Common myeloid progenitor, CD34-positive (primary cell): ENCODE measurements at regions of chr16 and their contacts with region 1.

Region 1: GRCh38 chr16:57863434-57864160 is 61.3 kb upstream of the KIFC3 start:
- DNase-seq: peak; percentile 44 to 46 (median 46)
- H3K4me3 ChIP-seq: no peak overlapping the region
- H3K27ac ChIP-seq: no peak overlapping the region
- H3K4me1 ChIP-seq: peaks cover 0 to 2% (median under 1%) of the 10 kb centered on the region in 4 experiments
- H3K27me3 ChIP-seq: no peaks in the 10 kb centered on the region

Region 2: DNA sequence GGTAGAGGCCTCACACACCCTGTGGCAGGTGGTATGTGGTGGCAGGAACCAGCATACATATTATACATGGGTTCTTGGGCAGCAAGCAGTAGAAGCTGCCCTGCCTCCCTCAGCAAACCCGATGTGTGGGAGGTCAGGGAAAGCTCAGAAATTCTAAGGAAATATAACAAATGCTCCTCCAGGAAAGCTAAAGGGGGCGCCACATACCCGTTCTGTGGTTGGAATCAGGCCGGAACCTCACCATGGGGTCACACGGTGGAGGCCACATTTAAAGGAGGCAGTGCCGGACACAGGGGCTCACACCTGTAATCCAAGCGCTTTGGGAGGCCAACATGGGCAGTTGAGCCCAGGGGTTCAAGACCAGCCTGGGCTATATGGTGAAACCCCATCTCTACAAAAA is 140.4 kb before region 1 on chr16:
- CTCF ChIA-PET with region 1: no interaction called
- POLR2A ChIA-PET with region 1: no interaction called
- DNase-seq: no peak
- H3K4me3 ChIP-seq: no peak overlapping the region
- H3K27ac ChIP-seq: no peak overlapping the region
- H3K4me1 ChIP-seq: peaks cover 0 to 45% (median 10%) of the 10 kb centered on the region in 4 experiments
- H3K27me3 ChIP-seq: no peaks in the 10 kb centered on the region

Region 3: DNA sequence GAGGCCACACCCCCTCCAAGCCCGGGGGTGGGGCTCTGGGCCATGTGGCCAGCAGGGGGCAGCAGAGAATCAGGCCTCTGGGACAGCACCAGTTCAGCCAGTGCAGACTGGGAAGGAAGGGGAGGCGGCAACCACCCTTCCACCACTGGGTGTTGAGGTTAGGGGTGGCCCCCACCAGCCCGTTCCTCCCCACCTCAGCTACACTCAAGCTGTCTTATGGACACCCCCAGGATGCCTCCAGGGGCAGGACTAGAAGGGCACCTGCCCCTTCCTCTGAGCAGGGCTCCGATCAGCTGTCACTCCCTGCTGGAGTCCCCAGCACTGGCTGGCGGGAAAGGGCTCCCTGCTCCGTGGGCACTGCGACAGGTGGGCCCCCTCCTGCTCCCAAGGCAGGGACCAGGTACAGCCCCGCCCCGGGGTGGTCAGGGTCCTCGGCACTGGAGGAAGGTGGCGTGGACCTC is 106.2 kb before region 1 on chr16:
- CTCF ChIA-PET with region 1: interaction called, 22 read pairs
- POLR2A ChIA-PET with region 1: no interaction called
- DNase-seq: peak; percentile 58 to 71 (median 62)
- H3K4me3 ChIP-seq: no peak overlapping the region
- H3K27ac ChIP-seq: no peak overlapping the region
- H3K4me1 ChIP-seq: peaks cover 0 to 5% (median 0%) of the 10 kb centered on the region in 4 experiments
- H3K27me3 ChIP-seq: no peaks in the 10 kb centered on the region

Region 4: DNA sequence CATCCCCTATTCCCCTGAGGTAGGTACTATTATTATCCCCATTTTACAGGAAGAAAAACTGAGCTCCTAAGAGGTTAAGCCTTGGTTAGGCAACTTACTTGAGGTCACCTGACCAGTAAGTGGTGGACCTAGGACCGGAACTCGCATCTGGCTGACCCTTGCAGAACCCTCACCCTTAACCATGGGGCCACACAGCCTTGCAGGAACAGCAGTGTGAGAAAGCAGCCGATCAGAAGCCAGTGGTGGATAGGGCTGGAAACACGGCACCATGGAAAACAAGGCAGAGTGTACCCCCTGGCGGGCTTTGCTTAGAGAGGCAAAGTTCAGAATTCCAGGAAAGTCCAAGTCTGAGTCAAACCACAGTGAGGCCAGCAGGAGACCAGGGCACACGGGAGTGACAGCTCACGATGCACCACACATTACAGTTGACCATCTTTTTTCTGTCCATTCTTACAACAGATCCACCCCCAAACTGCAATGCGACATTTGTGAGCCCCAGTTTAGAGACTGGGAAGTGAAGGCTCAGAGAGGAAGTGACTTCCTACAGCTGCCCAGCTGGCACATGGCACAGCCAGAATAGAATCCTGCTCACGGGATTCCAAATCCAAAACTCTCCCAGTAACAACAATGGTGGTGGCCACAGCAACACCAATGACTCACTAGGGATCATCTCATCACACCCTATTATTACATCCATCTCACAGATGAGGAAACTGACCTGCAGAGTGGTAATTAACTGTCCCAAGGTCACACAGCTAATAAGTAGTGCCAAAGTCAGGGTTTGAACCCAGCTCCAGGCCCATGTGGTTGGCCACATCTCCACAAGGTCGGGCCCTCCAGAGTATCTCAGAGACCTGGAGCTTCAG is 81.6 kb before region 1 on chr16:
- CTCF ChIA-PET with region 1: no interaction called
- POLR2A ChIA-PET with region 1: no interaction called
- DNase-seq: no peak
- H3K4me3 ChIP-seq: no peak overlapping the region
- H3K27ac ChIP-seq: no peak overlapping the region
- H3K4me1 ChIP-seq: no peaks in the 10 kb centered on the region
- H3K27me3 ChIP-seq: no peaks in the 10 kb centered on the region

Region 5: DNA sequence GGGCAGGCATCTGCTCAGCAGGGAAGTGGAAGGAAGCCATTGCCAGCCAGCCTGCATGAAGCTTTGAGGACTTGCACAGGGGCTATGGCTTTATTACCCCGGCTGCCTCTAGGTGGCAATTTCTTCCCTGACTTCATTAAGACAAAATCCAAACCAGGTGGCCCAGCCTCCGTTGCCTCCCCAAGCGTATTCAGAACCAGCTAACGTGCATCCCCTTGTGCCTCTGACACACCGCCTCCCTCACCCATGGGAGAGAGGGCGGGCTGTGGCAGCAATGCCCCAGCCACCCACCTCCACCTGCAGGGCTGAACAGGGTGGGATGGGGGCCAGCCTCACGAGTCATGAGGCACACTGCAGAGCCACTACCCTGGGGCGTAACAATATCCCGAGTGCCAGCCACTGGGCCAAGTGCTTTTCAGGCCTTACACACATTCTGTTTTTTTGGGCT is 68.1 kb before region 1 on chr16:
- CTCF ChIA-PET with region 1: interaction called, 101 read pairs
- POLR2A ChIA-PET with region 1: interaction called, 4 read pairs
- DNase-seq: peak; percentile 72 to 85 (median 83)
- H3K4me3 ChIP-seq: no peak overlapping the region
- H3K27ac ChIP-seq: no peak overlapping the region
- H3K4me1 ChIP-seq: peaks cover 9 to 39% (median 38%) of the 10 kb centered on the region in 4 experiments
- H3K27me3 ChIP-seq: no peaks in the 10 kb centered on the region

Region 6: GRCh38 chr16:57910726-57911125 is 47.1 kb after region 1 on chr16:
- CTCF ChIA-PET with region 1: no interaction called
- POLR2A ChIA-PET with region 1: no interaction called
- DNase-seq: no peak
- H3K4me3 ChIP-seq: no peak overlapping the region
- H3K27ac ChIP-seq: no peak overlapping the region
- H3K4me1 ChIP-seq: peaks cover 0 to 7% (median 2%) of the 10 kb centered on the region in 4 experiments
- H3K27me3 ChIP-seq: peaks cover 0 to 2% (median 0%) of the 10 kb centered on the region in 5 experiments

Region 7: GRCh38 chr16:57966133-57966805 is 102.7 kb after region 1 on chr16:
- CTCF ChIA-PET with region 1: no interaction called
- POLR2A ChIA-PET with region 1: no interaction called
- DNase-seq: no peak
- H3K4me3 ChIP-seq: no peak overlapping the region
- H3K27ac ChIP-seq: no peak overlapping the region
- H3K4me1 ChIP-seq: peaks cover 0 to 10% (median 3%) of the 10 kb centered on the region in 4 experiments
- H3K27me3 ChIP-seq: no peaks in the 10 kb centered on the region